PC-3 (cell line): ENCODE measurements at regions of chr17 and their contacts with region 1.

Region 1: DNA sequence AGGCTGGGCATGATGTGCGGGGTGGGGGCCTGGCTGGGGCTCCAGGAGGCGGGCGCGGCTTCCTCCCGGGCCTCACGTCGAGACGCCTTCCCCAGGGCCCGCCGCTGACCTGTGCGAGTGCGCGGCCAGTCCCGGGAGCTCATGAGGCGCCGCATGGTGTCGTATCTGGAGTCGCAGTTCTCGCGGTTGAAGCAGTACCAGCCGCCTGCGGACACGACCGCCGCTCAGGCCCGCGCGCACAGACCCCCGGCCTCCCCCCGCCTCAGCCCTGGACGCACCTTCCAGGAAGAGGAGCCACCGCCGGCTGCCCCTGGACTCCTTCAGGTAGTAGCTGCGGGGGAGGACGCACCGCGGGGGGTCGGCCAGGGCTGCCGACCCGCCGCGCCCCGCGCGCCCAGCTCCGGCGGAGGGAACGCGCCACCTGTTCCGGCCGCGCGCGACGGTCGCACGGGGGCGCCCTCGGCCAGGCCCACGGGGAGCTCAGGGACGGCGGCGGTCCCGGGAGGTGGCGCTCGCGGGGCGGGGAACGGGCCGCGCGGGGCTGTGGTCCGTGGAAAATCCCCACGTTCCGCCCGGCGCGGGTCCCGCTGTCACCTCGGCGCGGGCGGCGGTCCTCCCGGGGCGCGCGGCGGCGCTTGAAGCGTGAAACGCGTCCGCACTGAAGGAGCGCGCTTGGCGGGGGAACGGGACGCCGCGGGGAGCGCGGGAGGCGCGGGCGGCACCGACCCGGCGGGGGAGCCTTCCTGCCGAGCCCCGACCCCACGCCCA is 1.4 kb downstream of the NOTUM start:
- DNase-seq: peak; percentile 59
- ATAC-seq: peak; percentile 89
- H3K4me3 ChIP-seq: peak overlapping the region; percentile 52
- H3K27ac ChIP-seq: no peak overlapping the region
- H3K4me1 ChIP-seq: no peaks in the 10 kb centered on the region
- H3K27me3 ChIP-seq: peaks cover 22% of the 10 kb centered on the region
- CTCF ChIP-seq: peak; percentile 69

Region 2: GRCh38 chr17:82003411-82004381 is 44.1 kb after region 1 on chr17:
- CTCF ChIA-PET with region 1: interaction called, 13 read pairs
- POLR2A ChIA-PET with region 1: no interaction called
- intact Hi-C with region 1: no loop called
- DNase-seq: peak; percentile 96
- ATAC-seq: peak; percentile 94
- H3K4me3 ChIP-seq: no peak overlapping the region
- H3K27ac ChIP-seq: peak overlapping the region; percentile 51
- H3K4me1 ChIP-seq: peaks cover 21% of the 10 kb centered on the region
- H3K27me3 ChIP-seq: no peaks in the 10 kb centered on the region
- CTCF ChIP-seq: no peak

Region 3: DNA sequence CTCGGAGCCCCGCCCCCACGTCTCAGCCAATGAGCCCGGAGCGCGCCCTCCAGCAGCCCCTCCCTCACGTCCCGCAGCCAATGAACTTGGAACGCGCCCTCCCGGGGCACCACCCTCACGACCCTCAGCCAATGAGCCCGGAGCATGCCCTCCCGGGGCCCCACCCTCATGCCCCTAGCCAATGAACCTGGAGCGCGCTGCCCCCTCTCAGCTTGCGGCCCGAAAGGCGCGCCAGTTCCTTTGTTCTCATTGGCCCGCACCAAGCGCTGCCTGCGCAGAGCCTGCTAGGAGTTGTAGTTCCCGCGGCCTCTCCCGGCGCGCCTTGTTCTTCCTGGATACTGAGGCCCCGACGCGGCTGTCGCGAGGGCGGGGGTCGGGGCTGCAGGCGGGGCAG is 63.4 kb after region 1 on chr17 and contains the start of gene LRRC45:
- CTCF ChIA-PET with region 1: interaction called, 40 read pairs
- POLR2A ChIA-PET with region 1: no interaction called
- intact Hi-C with region 1: loop called (anchors 1 kb)
- DNase-seq: peak; percentile 99
- ATAC-seq: peak; percentile 84
- H3K4me3 ChIP-seq: peak within 1 kb of the TSS; percentile 100
- H3K27ac ChIP-seq: peak within 1 kb of the TSS; percentile 57
- H3K4me1 ChIP-seq: peaks cover 21% of the 10 kb centered on the region; the same call in 1 of the 2 replicates
- H3K27me3 ChIP-seq: no peaks in the 10 kb centered on the region
- CTCF ChIP-seq: no peak
- total RNA-seq, gene LRRC45: 71.5 and 90.0 TPM in 2 replicates